IMR-90 (cell line): ENCODE measurements at regions of chr9 and their contacts with region 1.

Region 1: DNA sequence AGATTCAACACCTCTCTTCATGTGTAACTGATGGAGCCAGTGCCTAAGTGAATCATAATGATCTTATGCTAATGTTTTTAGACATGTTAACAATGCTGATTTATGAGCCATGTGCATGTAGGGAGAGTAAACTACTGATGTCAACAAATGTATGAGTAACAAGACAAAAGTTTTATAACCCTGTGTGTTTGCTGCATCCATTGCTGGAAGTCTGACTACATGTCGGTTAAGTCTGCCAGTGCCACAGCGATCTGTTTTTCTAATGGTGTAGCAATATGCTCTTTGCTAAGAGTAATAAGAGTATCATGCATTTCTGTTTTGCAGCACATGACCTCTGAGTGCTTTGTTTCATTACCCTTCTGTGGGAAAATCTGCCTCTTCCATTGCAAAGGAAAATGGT is 26.4 kb upstream of the TMOD1 start:
- DNase-seq: peak; percentile 89
- ATAC-seq: peak; percentile 82
- H3K4me3 ChIP-seq: no peak overlapping the region
- H3K27ac ChIP-seq: no peak overlapping the region
- H3K4me1 ChIP-seq: peaks cover 18% of the 10 kb centered on the region
- H3K27me3 ChIP-seq: no peaks in the 10 kb centered on the region
- CTCF ChIP-seq: no peak
- POLR2A ChIP-seq: no peak
- RAD21 ChIP-seq: no peak

Region 2: DNA sequence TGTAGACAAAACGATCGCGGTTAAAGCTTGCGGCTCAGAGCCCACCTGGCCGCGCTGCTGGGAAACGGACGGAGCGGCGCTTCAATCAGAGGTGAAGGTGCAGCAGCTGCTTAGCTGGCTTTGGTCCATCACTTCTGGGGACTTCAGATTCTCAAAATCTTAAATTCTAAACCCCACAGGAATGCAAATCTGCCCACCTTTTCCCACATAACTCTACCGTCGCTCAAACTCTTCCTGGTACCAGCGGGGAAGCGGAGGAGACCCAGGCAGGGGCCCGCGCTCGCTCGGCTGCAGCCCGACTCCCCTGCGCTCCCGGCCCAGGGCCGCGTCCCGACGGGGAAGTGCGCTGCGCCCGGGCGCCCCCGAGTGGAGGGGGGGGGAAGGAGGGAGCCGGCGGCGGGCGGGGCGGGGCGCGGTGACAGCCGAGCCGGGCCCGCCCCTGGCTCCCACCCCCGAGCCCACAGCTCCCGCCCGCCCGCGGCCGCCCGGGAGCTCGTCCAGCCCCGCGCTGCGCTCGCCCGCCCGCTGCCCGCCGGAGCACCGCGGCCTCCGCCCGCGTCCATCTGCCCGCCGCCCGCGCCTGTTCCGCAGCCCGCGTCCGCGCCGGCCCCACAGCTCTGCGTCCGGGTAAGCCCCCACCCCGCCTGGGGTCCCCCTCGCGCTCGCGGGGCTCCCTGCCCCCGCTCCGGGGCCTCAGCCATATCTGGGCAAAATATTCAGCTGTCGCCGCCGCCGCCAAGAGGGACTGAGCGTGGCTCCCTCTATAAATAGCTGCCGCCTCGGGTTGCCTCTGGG is 26.3 kb after region 1 on chr9 and contains the start of gene TMOD1:
- CTCF ChIA-PET with region 1: interaction called, 10 read pairs
- POLR2A ChIA-PET with region 1: no interaction called
- dilution Hi-C with region 1: no loop called
- in situ Hi-C with region 1: no loop called
- intact Hi-C with region 1: no loop called
- DNase-seq: peak; percentile 34
- ATAC-seq: peak; percentile 94
- H3K4me3 ChIP-seq: peak within 1 kb of the TSS; percentile 68
- H3K27ac ChIP-seq: no peak within 1 kb of the TSS; the same call in 1 of the 2 replicates
- H3K4me1 ChIP-seq: peaks cover 18% of the 10 kb centered on the region; the same call in 1 of the 2 replicates
- H3K27me3 ChIP-seq: peaks cover 23% of the 10 kb centered on the region
- CTCF ChIP-seq: peak; percentile 18; the same call in 1 of the 2 replicates
- POLR2A ChIP-seq: no peak
- RAD21 ChIP-seq: peak; percentile 16; the same call in 1 of the 2 replicates
- total RNA-seq, gene TMOD1: 0.18 and 0.28 TPM in 2 replicates

Region 3: GRCh38 chr9:97567182-97567893 is 92.3 kb after region 1 on chr9:
- CTCF ChIA-PET with region 1: no interaction called
- POLR2A ChIA-PET with region 1: no interaction called
- dilution Hi-C with region 1: no loop called
- in situ Hi-C with region 1: no loop called
- intact Hi-C with region 1: no loop called
- DNase-seq: no peak
- ATAC-seq: no peak
- H3K4me3 ChIP-seq: no peak overlapping the region
- H3K27ac ChIP-seq: no peak overlapping the region
- H3K4me1 ChIP-seq: peaks cover 4% of the 10 kb centered on the region; the same call in 1 of the 2 replicates
- H3K27me3 ChIP-seq: no peaks in the 10 kb centered on the region
- CTCF ChIP-seq: no peak
- POLR2A ChIP-seq: no peak
- RAD21 ChIP-seq: no peak

Region 4: DNA sequence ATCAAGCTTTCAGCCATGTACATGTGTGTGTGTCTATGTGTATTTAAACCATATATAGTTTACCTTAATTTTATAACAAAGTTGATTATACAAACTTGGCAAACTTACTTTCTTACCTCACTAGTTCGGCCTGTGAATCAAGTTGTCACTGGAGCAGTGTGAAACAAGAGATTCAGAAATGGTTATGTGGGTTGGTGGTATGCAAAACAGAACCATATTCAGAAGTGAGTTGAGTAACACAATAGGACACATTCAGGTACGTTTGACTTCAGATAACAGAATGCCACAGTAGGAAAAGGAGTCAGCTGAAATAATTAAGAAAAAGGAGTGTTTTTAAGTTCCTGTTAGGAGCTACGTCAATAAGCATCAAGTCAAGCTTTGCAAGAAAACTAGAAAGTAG is 200.6 kb after region 1 on chr9:
- CTCF ChIA-PET with region 1: no interaction called
- POLR2A ChIA-PET with region 1: no interaction called
- dilution Hi-C with region 1: no loop called
- in situ Hi-C with region 1: no loop called
- intact Hi-C with region 1: no loop called
- DNase-seq: no peak
- ATAC-seq: no peak
- H3K4me3 ChIP-seq: no peak overlapping the region
- H3K27ac ChIP-seq: no peak overlapping the region
- H3K4me1 ChIP-seq: peaks cover 4% of the 10 kb centered on the region; the same call in 1 of the 2 replicates
- H3K27me3 ChIP-seq: no peaks in the 10 kb centered on the region
- CTCF ChIP-seq: no peak
- POLR2A ChIP-seq: no peak
- RAD21 ChIP-seq: no peak